ENCODE measurements at regions of chr11 and their contacts with region 1.

Region 1: DNA sequence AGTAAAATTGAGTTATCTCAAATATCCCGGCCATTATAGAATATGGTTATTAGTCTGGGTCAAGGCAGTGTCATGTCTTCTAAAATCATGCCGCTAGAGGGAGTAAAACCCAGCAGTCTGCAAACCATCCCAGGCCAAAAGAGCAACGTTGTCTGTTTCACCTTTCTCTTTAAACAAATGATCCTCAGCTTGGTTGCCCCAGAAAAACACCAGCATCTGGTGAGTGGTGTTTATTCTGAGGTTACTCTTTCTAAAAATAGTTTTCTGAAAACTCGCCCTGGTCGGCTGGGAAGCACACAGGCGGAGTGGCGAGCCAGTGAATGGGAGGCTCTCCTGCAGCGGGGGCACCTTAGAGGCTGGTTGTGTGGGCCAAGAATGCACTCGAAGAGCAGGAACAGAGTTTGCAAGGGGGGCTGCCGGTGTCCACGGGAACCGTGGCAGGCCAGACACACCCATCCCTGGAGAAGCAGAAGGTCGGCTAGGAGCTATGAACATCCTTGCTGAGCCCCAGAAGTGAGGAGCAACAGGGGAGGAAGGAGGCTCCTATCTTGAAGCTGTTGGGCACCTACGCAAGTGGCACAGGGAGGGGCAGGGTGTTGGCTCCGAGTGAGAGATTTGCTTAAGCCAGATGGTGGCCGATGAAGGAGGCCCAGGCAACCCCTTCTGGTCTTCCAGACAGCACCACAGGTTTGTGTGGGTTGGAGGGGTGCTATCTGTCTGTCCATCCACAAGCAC is 297.1 kb downstream of the ETS1 start:
- DNase-seq: peak; percentile 69
- H3K4me3 Mint-ChIP-seq: peak overlapping the region; percentile 84
- H3K27ac Mint-ChIP-seq: peak overlapping the region; percentile 95
- H3K4me1 Mint-ChIP-seq: peaks cover 93% of the 10 kb centered on the region
- H3K27me3 Mint-ChIP-seq: no peaks in the 10 kb centered on the region

Region 2: GRCh38 chr11:128026596-128026995 is 263.7 kb before region 1 on chr11:
- intact Hi-C with region 1: loop called (anchors 2 kb)
- DNase-seq: no peak
- H3K4me3 Mint-ChIP-seq: no peak overlapping the region
- H3K27ac Mint-ChIP-seq: no peak overlapping the region
- H3K4me1 Mint-ChIP-seq: peaks cover 11% of the 10 kb centered on the region
- H3K27me3 Mint-ChIP-seq: peaks cover 46% of the 10 kb centered on the region

Region 3: DNA sequence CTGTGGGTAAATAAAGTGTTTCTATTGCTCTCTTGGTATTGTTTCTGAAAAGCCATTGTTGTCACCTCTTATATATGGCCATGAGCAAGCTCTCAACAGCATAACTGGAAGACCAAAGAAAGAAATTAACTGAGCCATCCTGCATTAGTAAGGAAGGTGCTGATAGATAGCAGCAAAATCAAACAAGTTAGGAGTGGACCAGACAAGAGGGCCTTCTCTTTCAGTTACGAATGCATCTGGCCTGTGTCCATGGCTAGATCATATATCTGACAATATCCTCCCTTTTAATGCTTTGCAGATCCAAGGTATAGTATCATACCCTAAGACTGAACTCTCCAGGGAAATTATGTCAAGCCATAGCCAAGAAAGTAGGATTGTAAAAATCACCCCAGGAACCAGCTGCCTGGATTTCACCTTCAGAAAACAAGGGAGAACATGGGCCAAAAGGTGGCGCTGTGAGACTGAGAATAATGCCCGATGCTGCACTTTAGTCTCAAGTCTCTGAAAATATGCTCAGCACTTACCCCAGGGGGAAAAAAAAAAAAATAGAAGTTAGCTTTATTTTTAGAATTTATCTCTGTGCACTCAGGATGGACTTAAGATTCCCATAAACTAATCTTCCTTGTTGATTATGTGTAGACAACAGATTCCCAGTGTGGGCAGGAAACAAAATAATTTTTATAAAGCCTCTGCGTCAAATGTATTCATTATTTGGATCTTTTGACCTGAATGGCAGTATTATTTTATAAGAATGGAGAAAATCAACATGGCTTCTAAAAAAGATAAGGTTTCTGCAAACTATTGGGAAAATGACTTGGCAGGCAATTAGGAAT is 118.0 kb before region 1 on chr11:
- intact Hi-C with region 1: loop called (anchors 1 kb)
- DNase-seq: peak; percentile 72
- H3K4me3 Mint-ChIP-seq: no peak overlapping the region
- H3K27ac Mint-ChIP-seq: peak overlapping the region; percentile 54
- H3K4me1 Mint-ChIP-seq: peaks cover 35% of the 10 kb centered on the region
- H3K27me3 Mint-ChIP-seq: peaks cover 6% of the 10 kb centered on the region

Region 4: DNA sequence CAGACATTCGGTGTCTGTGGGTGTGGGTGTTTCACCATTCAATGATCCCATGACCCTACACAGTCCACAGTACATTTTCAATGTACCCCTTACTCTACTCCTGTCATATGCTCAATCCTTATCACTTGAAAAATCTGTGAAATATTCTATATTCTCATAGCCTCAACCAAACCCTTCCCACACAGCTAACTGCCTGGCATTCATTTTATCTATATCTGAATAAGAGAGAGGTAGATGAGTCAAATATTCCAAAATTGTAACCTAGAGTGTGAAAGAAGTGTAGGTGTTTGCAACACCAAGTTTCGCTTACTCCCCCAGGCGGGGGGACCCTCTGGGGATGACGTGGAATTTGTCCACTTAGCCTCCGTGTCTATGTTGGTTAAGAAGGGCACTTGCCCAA is 57.7 kb before region 1 on chr11:
- intact Hi-C with region 1: loop called (anchors 1 kb)
- DNase-seq: no peak
- H3K4me3 Mint-ChIP-seq: no peak overlapping the region
- H3K27ac Mint-ChIP-seq: peak overlapping the region; percentile 81
- H3K4me1 Mint-ChIP-seq: peaks cover 58% of the 10 kb centered on the region
- H3K27me3 Mint-ChIP-seq: no peaks in the 10 kb centered on the region

Region 5: DNA sequence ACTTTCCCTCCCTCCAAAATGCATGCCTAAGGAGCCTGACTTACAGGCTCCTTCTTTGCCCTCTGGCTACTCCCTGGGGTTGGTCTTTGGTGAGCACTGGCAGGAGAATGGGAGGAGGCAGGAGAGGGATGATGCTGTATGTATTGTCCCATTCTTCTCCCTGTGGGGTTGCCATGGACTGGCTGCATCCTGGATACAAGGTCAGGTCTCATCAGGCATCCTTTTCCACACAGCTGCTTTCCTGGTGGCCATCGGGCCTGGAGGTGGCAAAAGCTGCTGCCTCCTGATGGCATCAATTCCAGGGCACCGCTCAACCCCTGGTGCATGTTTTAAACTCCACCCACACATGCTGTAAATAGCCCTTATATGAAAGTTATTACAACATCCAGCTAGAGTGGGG is 39.9 kb after region 1 on chr11:
- intact Hi-C with region 1: no loop called
- DNase-seq: no peak
- H3K4me3 Mint-ChIP-seq: peak overlapping the region; percentile 34
- H3K27ac Mint-ChIP-seq: peak overlapping the region; percentile 94
- H3K4me1 Mint-ChIP-seq: peaks cover 67% of the 10 kb centered on the region
- H3K27me3 Mint-ChIP-seq: no peaks in the 10 kb centered on the region

Region 6: GRCh38 chr11:128342511-128343134 is 52.4 kb after region 1 on chr11:
- intact Hi-C with region 1: loop called (anchors 1 kb)
- DNase-seq: peak; percentile 55
- H3K4me3 Mint-ChIP-seq: peak overlapping the region; percentile 7
- H3K27ac Mint-ChIP-seq: peak overlapping the region; percentile 81
- H3K4me1 Mint-ChIP-seq: peaks cover 73% of the 10 kb centered on the region
- H3K27me3 Mint-ChIP-seq: no peaks in the 10 kb centered on the region

Region 7: DNA sequence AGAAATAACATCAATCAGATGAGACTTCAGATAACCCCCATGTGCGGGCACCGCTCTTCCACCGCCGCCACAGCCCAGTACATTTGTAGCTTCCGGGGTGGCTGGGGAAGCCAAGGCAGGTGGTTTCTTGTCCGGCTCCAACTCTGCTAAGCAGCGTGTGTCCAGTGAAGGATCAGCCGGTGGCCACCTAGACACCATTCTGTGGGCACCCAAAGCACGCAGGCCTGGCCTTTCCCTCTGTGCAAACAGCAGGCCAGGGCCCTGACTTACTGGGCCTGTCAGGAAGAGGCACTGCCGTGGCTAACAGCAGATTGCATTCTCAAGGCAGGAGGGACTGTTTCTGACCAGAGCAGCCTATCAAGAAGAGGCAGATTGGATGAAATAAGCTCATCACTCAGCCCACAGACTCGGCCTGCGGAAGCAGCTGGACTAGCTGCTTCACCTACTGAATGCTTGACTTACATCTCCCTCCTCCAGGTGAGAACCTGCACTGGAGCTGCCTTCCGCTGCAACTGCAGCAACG is 222.3 kb after region 1 on chr11:
- intact Hi-C with region 1: loop called (anchors 2 kb)
- DNase-seq: no peak
- H3K4me3 Mint-ChIP-seq: peak overlapping the region; percentile 97
- H3K27ac Mint-ChIP-seq: peak overlapping the region; percentile 90
- H3K4me1 Mint-ChIP-seq: peaks cover 94% of the 10 kb centered on the region
- H3K27me3 Mint-ChIP-seq: no peaks in the 10 kb centered on the region

Region 8: DNA sequence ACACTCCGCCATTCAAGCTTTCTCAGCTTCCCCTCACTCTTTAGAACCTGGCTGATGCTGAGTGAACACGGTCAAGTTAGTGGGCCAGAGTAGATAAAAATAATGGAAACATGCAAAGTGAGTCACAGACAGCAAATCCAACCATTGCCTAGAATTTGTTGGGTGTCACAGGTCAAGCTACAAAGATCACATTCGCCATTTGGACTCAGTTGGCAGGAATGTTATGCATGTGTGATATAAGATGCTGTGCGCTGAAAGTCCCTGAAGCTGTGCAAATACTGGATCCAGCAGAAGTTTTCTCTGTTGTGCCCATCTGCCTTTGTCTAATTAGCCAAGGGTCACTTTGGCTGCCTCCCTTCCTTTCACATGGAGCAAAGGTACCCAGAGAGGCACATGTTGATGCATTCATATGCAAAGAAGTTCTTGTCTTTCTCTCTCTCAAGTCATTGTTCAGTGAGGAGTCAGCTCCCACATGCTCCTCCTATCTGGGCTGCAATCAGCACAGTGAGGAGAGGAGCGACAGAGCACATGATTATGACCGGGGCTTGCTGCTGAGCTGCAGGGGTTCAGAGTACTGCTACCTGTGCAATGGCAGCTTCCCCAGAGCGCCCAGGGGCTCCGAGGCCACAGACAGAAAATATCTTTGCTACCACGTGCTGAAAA is 443.3 kb after region 1 on chr11:
- intact Hi-C with region 1: loop called (anchors 5 kb)
- DNase-seq: no peak
- H3K4me3 Mint-ChIP-seq: peak overlapping the region; percentile 72
- H3K27ac Mint-ChIP-seq: peak overlapping the region; percentile 90
- H3K4me1 Mint-ChIP-seq: peaks cover 87% of the 10 kb centered on the region
- H3K27me3 Mint-ChIP-seq: no peaks in the 10 kb centered on the region